Aorta (tissue), 5 donors: ENCODE measurements at regions of chr2 and their contacts with region 1.

Region 1: DNA sequence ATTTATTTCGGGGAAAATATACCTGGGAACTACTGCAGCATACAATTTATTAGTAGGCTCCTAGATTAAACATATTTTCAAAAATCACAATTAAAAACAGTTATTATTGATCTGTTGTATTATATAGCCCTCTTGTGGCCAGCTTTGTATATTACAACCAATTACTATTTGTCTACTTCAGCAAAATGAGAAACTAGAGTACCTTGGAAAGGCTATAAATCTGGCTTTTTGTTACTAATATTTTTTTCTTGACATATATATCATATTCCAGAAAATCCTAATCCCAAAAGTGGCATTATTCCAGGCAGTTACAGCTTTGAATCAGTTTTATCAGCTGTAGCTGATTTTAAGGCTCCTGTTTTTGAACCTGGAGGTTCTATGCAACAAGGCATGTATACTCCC is 101.2 kb downstream of the UBR3 start:
- DNase-seq: no peak
- ATAC-seq: no peak
- H3K4me3 ChIP-seq: no peak overlapping the region
- H3K27ac ChIP-seq: no peak overlapping the region
- H3K4me1 ChIP-seq: no peaks in the 10 kb centered on the region
- H3K27me3 ChIP-seq: no peaks in the 10 kb centered on the region

Region 2: DNA sequence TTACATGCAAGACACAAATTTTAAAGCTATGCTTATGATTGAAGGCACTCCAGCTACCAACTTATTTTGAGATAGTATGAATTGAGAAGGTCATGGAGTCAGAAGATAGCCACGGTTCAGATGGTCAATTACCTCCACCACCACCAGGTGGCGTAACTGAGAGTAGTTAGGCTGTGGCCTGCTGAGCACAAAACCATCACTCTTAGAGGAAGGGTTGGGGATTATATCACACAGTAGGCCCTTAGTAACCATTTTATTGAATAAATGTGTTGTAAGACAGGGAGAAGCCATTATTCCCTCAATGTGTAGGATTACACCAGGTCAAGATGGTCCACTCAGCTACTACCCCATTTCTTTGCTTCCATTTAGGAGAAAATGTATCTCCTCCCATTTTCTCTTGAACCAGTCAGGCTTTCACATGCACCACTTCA is 400.2 kb before region 1 on chr2:
- intact Hi-C with region 1: loop called in 1 of 2 experiments (anchors 10 kb)
- DNase-seq: peak; percentile 68 to 81
- ATAC-seq: no peak
- H3K4me3 ChIP-seq: no peak overlapping the region
- H3K27ac ChIP-seq: no peak overlapping the region
- H3K4me1 ChIP-seq: no peaks in the 10 kb centered on the region
- H3K27me3 ChIP-seq: no peaks in the 10 kb centered on the region

Region 3: DNA sequence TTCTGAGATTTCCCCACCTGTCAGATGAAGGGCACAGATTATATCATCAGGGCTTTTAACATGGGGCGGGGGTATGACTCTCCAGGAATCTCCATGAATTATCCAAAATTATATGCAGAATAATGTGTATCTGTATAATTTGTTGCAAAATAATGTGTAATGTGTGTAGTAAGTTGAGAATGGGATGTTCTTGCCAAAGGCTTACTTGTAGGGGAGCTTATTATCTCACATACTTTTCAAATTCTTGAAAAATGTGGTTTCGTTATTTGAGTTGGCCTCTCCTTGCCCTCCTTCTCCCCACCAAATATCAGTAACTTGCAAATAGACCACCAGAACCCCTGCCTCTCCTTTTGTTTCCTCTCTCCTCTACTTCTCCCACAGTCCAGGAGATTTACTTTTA is 65.6 kb before region 1 on chr2:
- intact Hi-C with region 1: no loop called
- DNase-seq: no peak
- ATAC-seq: no peak
- H3K4me3 ChIP-seq: no peak overlapping the region
- H3K27ac ChIP-seq: no peak overlapping the region
- H3K4me1 ChIP-seq: no peaks in the 10 kb centered on the region
- H3K27me3 ChIP-seq: no peaks in the 10 kb centered on the region